Naive thymus-derived CD4-positive, alpha-beta T cell (primary cell): ENCODE measurements at regions of chr5 and their contacts with region 1.

Region 1: GRCh38 chr5:1140171-1140817 is 28.4 kb upstream of the SLC12A7 start:
- DNase-seq: peak; percentile 74 to 93 (median 84)
- ATAC-seq: peak; percentile 90
- H3K4me3 ChIP-seq: no peak overlapping the region
- H3K4me3 Mint-ChIP-seq: peak overlapping the region in 2 of 10 donors; percentile 44 to 53
- H3K27ac ChIP-seq: no peak overlapping the region
- H3K27ac Mint-ChIP-seq: peak overlapping the region in 1 of 9 donors; percentile 51
- H3K4me1 ChIP-seq: no peaks in the 10 kb centered on the region
- H3K4me1 Mint-ChIP-seq: peaks cover 0 to 18% (median 4%) of the 10 kb centered on the region in 7 donors
- H3K27me3 ChIP-seq: no peaks in the 10 kb centered on the region
- H3K27me3 Mint-ChIP-seq: peaks cover 0 to 4% (median 0%) of the 10 kb centered on the region in 5 donors

Region 2: DNA sequence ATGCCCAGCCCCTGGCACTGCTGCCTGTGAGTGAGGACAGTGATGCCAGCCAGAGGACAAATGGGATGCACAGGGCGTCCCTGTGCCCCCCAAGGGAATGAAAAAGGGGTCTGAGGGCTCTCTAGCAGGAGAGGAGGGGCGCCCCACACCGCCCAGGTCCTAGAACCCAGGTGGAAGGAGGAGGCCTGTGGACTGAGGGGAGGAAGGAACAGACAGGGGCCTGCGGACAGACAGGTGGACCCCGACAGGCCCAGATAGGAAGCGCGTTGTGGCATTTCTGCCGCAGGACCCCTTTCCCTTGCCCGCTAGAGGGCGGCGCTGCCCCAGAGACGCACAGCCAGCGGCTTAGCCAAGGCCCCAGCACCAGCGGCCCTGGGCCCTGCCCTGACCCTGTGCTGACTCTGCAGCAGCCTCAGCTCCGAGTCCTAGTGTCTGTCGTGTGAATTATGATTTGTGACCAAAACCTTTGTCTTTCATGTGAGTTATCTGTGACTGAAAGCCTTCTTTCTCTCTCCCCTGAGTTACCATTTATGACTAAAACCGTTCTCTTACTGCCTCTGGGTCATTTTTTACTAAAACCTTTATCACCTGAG is 216.9 kb before region 1 on chr5:
- CTCF ChIA-PET with region 1: interaction called, 23 read pairs
- POLR2A ChIA-PET with region 1: interaction called, 5 read pairs
- intact Hi-C with region 1: loop called in 1 of 2 experiments (anchors 1 kb)
- DNase-seq: peak; percentile 41 to 79 (median 64)
- ATAC-seq: peak; percentile 87
- H3K4me3 ChIP-seq: no peak overlapping the region
- H3K4me3 Mint-ChIP-seq: no peak overlapping the region
- H3K27ac ChIP-seq: no peak overlapping the region
- H3K27ac Mint-ChIP-seq: no peak overlapping the region
- H3K4me1 ChIP-seq: no peaks in the 10 kb centered on the region
- H3K4me1 Mint-ChIP-seq: peaks cover 6 to 15% (median 11%) of the 10 kb centered on the region in 7 donors
- H3K27me3 ChIP-seq: no peaks in the 10 kb centered on the region
- H3K27me3 Mint-ChIP-seq: peaks cover 21 to 43% (median 33%) of the 10 kb centered on the region in 5 donors

Region 3: DNA sequence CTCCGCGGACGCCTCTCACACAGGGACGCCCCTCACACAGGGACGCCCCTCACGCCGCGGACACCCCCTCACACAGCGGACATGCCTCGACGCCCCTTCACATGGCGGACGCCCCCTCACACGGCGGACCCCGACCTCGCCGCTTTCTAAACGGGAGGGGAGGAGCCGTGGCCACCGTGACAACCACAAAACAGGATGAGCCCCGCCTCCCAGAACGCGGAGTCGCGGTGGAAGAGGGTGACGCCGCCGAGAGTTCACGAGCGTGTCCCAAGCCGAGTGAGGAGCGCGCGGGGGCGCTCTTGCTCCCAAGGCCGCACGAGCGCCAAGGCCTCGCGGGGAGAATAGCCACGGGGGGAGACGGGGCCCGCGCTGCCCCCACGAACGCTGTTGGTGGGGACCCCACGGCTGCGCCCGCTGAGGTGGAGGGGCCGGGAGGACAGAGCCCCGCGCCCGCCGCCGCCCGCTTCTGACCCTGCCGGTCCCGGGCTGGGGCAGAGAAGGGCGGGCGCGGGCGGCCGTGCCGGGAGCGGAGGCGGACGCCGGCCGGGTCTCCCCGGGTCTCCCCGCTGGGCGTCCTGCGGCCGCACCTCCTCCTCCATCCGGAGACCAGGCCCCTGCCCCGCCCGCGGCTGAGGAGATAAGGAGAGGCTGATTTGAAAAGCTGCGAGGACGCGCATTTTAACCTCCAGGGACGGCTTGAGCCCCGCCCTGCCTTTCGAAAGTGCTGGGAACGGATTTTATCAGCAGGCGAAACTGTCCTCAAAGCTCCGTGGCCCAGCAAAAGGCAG is 135.6 kb before region 1 on chr5:
- CTCF ChIA-PET with region 1: interaction called, 7 read pairs
- POLR2A ChIA-PET with region 1: no interaction called
- intact Hi-C with region 1: loop called (anchors 1 to 2 kb)
- DNase-seq: peak; percentile 27 to 59 (median 50)
- ATAC-seq: peak; percentile 67
- H3K4me3 ChIP-seq: peak overlapping the region; percentile 35
- H3K4me3 Mint-ChIP-seq: peak overlapping the region; percentile 67 to 87 (median 79)
- H3K27ac ChIP-seq: no peak overlapping the region
- H3K27ac Mint-ChIP-seq: no peak overlapping the region
- H3K4me1 ChIP-seq: peaks cover 6 to 32% of the 10 kb centered on the region in 2 donors
- H3K4me1 Mint-ChIP-seq: peaks cover 11 to 33% (median 22%) of the 10 kb centered on the region in 7 donors
- H3K27me3 ChIP-seq: peaks cover 0 to 5% of the 10 kb centered on the region in 2 donors
- H3K27me3 Mint-ChIP-seq: peaks cover 12 to 49% (median 18%) of the 10 kb centered on the region in 5 donors

Region 4: GRCh38 chr5:1052641-1053390 is 87.5 kb before region 1 on chr5:
- CTCF ChIA-PET with region 1: interaction called, 6 read pairs
- POLR2A ChIA-PET with region 1: no interaction called
- intact Hi-C with region 1: loop called in 1 of 2 experiments (anchors 1 kb)
- DNase-seq: no peak
- ATAC-seq: no peak
- H3K4me3 ChIP-seq: no peak overlapping the region
- H3K4me3 Mint-ChIP-seq: no peak overlapping the region
- H3K27ac ChIP-seq: no peak overlapping the region
- H3K27ac Mint-ChIP-seq: no peak overlapping the region
- H3K4me1 ChIP-seq: no peaks in the 10 kb centered on the region
- H3K4me1 Mint-ChIP-seq: peaks cover 0 to 4% (median 0%) of the 10 kb centered on the region in 7 donors
- H3K27me3 ChIP-seq: no peaks in the 10 kb centered on the region
- H3K27me3 Mint-ChIP-seq: no peaks in the 10 kb centered on the region

Region 5: DNA sequence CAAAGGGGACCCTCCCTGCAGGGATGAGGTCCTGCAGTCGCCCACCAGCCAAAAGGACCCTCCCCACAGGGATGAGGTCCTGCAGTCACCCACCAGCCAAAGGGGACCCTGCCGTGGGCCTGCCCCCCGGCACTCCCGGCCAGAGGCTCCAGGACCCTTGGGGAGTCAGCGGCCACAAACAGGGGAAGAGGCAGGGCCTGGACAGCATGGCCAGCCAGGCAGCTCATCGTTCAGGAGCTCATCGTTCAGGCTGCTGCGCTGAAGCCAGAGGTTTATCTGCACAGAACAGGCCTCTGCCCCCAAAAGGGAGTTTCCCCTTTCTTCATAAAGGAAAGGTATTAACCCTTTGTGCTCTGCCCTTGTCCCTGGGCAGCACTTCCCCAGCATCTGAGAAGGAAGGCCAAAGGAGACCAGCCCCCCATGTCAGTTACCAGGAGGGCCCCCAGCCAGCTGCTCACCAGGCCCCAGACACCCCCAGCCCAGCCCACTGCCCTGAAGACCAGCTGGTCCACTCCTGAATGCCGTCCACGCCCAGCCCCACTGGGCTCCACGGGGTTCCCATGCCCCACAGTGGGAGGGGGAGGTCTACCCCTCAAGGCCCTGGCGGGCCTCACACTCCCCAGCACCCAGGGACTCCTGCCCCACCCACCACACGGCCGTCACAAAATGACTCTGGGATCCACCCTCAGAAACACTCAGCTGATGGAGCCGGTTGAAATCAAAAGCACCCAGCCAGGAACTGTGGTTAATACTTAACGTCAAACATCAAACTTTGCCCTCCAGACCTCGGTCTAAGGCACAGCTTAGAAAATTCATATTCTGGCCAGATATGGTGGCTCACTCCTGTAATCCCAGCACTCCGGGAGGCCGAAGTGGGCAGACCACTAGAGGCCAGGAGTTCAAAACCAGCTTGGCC is 34.7 kb before region 1 on chr5:
- CTCF ChIA-PET with region 1: interaction called, 5 read pairs
- POLR2A ChIA-PET with region 1: no interaction called
- intact Hi-C with region 1: loop called (anchors 1 kb)
- DNase-seq: peak; percentile 50 to 86 (median 83)
- ATAC-seq: peak; percentile 82
- H3K4me3 ChIP-seq: peak overlapping the region; percentile 77
- H3K4me3 Mint-ChIP-seq: peak overlapping the region; percentile 77 to 94 (median 88)
- H3K27ac ChIP-seq: peak overlapping the region; percentile 89
- H3K27ac Mint-ChIP-seq: peak overlapping the region; percentile 85 to 100 (median 97)
- H3K4me1 ChIP-seq: peaks cover 37 to 79% of the 10 kb centered on the region in 2 donors
- H3K4me1 Mint-ChIP-seq: peaks cover 48 to 90% (median 69%) of the 10 kb centered on the region in 7 donors
- H3K27me3 ChIP-seq: no peaks in the 10 kb centered on the region
- H3K27me3 Mint-ChIP-seq: no peaks in the 10 kb centered on the region

Region 6: DNA sequence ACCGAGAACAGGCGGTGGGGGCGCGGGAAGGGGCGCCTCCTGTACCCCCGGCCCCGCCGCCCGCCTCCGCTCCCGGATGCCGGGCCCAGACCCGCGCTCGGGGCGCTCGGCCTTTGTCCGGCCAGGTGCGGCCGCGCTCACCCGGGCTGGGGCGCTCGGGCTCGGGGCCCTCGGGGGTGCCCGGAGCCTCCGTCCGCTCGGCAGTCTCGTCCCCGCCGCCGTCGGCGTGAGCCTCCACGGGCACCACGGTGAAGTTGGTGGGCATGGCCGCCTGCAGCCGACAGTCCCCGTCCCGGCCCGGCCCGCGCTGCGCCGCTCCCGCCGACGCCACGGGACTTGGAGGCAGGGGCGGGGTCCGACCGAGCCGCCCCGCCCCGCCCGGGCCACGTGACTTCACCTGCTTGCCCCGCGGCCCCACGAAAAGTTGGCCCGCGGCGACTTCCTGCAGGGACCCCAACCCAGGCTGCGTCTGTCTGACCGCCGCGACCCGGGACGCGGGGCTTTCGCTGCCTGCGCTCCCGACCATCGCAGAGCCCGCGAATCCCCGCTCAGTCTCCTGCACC is 28.5 kb before region 1 on chr5 and contains the start of gene SLC12A7:
- CTCF ChIA-PET with region 1: no interaction called
- POLR2A ChIA-PET with region 1: no interaction called
- intact Hi-C with region 1: loop called in 1 of 2 experiments (anchors 1 kb)
- DNase-seq: peak; percentile 43 to 80 (median 58)
- ATAC-seq: peak; percentile 74
- H3K4me3 ChIP-seq: peak within 1 kb of the TSS; percentile 61
- H3K4me3 Mint-ChIP-seq: peak within 1 kb of the TSS; percentile 87 to 93 (median 88)
- H3K27ac ChIP-seq: peak within 1 kb of the TSS; percentile 83
- H3K27ac Mint-ChIP-seq: peak within 1 kb of the TSS; percentile 73 to 92 (median 86)
- H3K4me1 ChIP-seq: peaks cover 5 to 30% of the 10 kb centered on the region in 2 donors
- H3K4me1 Mint-ChIP-seq: peaks cover 20 to 41% (median 35%) of the 10 kb centered on the region in 7 donors
- H3K27me3 ChIP-seq: no peaks in the 10 kb centered on the region
- H3K27me3 Mint-ChIP-seq: no peaks in the 10 kb centered on the region
- total RNA-seq, gene SLC12A7: 45.3 to 101 (median 64.5) TPM

Region 7: DNA sequence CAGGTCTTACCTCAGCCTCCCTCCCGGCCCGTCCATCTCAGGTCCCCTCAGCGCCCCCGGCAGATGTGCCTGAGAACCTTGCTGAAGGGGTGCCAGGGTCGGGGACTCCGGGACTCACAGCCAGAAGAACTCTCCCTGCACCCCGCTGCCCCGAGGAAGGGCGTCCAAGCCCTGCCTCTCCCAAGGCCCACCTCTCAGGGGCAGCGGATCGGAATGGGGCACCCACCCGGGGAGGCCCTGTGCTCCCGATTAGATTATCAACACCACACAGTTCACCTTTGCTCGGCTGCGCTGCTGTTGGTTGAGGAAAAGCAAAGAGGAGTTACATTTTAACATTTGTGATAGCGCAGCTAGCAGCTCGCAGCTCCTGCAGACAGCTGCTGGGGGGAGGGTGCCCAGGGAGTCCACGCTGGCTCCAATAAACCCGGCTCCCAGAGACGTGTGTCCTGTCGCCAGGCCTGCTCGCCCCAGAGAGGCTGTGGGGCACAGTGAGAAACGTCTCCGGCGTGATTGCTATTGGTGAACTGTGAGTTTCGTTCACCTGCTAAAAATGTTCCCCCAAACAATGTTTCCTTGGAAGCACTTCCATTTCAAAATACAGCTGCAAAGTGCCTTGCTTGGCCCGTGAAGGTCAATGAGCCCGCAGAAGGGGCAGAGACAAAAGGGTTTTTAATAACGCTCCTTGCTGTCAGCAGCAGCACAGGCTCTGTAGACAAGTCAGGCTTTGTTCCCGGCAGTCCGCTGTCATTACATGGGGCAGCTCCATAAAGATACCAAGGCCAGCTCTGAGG is 42.5 kb after region 1 on chr5:
- CTCF ChIA-PET with region 1: no interaction called
- POLR2A ChIA-PET with region 1: no interaction called
- intact Hi-C with region 1: no loop called
- DNase-seq: peak in 1 of 9 donors; percentile 15
- ATAC-seq: no peak
- H3K4me3 ChIP-seq: no peak overlapping the region
- H3K4me3 Mint-ChIP-seq: no peak overlapping the region
- H3K27ac ChIP-seq: no peak overlapping the region
- H3K27ac Mint-ChIP-seq: no peak overlapping the region
- H3K4me1 ChIP-seq: no peaks in the 10 kb centered on the region
- H3K4me1 Mint-ChIP-seq: peaks cover 0 to 6% (median 0%) of the 10 kb centered on the region in 7 donors
- H3K27me3 ChIP-seq: no peaks in the 10 kb centered on the region
- H3K27me3 Mint-ChIP-seq: no peaks in the 10 kb centered on the region

Region 8: DNA sequence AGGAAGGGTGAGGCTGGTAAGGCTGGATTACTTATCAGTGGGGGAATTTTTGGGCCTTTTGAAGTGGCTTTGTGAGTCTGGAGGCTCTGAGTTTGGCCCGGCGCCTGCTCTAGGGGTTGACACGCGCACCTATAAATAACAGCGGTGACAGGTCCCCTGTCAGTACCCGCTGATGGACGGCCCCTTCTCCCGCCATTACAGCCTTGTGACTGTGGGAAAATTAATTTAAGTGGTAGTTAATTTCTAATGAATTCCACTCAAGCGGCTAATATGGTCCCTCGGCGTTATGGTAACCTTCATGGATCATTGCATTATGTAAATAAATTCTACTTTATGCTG is 642.9 kb after region 1 on chr5:
- CTCF ChIA-PET with region 1: no interaction called
- POLR2A ChIA-PET with region 1: no interaction called
- intact Hi-C with region 1: no loop called
- DNase-seq: no peak
- ATAC-seq: no peak
- H3K4me3 ChIP-seq: no peak overlapping the region
- H3K4me3 Mint-ChIP-seq: no peak overlapping the region
- H3K27ac ChIP-seq: no peak overlapping the region
- H3K27ac Mint-ChIP-seq: peak overlapping the region in 1 of 9 donors; percentile 25
- H3K4me1 ChIP-seq: no peaks in the 10 kb centered on the region
- H3K4me1 Mint-ChIP-seq: peaks cover 0 to 21% (median 4%) of the 10 kb centered on the region in 7 donors
- H3K27me3 ChIP-seq: no peaks in the 10 kb centered on the region
- H3K27me3 Mint-ChIP-seq: peaks cover 0 to 12% (median 2%) of the 10 kb centered on the region in 5 donors